Transverse colon (tissue), 4 donors: ENCODE measurements at regions of chr13 and their contacts with region 1.

Region 1: GRCh38 chr13:29543230-29544215 is 52.0 kb downstream of the SLC7A1 start:
- DNase-seq: no peak
- H3K4me3 ChIP-seq: no peak overlapping the region
- H3K27ac ChIP-seq: no peak overlapping the region
- H3K4me1 ChIP-seq: peaks cover 0 to 12% (median 6%) of the 10 kb centered on the region in 4 donors
- H3K27me3 ChIP-seq: no peaks in the 10 kb centered on the region
- CTCF ChIP-seq: no peak
- EP300 ChIP-seq: no peak
- POLR2A ChIP-seq: no peak

Region 2: DNA sequence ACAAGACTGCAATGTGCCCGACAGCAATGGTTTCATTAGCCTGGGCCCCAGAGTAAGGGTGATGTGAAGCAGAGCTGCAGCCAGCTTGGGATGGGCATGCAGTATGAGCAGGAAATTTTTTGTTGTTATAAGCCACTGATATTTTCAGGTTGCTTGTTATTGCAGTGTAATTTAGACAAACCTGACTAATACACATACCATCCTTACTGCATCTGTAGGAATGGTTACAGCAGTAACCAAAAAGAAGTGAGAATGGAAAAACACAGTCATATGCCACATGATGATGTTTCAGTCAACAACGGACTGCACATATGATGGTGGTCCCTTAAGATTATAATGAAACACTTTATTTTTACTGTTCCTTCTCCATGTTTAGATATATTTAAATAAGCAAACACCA is 893.2 kb before region 1 on chr13:
- in situ Hi-C with region 1: no loop called
- intact Hi-C with region 1: loop called (anchors 5 kb)
- DNase-seq: no peak
- H3K4me3 ChIP-seq: no peak overlapping the region
- H3K27ac ChIP-seq: no peak overlapping the region
- H3K4me1 ChIP-seq: no peaks in the 10 kb centered on the region
- H3K27me3 ChIP-seq: no peaks in the 10 kb centered on the region
- CTCF ChIP-seq: no peak
- EP300 ChIP-seq: no peak
- POLR2A ChIP-seq: no peak

Region 3: DNA sequence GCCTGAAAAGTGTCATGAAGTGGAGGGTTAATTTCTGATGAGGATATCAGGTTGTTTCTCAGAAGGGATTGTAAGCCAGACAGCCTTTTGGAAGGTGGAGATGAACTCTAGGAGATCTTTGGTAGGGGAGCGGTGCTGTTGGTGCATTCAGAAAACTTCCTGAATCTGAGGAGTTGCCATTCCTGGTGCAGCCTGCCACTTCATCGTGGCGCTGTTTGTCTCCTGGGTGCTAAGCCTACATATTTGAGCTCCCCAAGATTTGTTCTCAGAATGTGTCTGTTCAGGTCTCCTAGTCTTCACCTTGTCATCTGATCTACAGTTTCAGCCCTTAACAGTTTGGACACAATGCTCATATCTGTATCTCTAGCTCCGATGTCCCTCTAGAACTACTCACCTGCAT is 437.7 kb before region 1 on chr13:
- in situ Hi-C with region 1: no loop called
- intact Hi-C with region 1: no loop called
- DNase-seq: no peak
- H3K4me3 ChIP-seq: no peak overlapping the region
- H3K27ac ChIP-seq: no peak overlapping the region
- H3K4me1 ChIP-seq: no peaks in the 10 kb centered on the region
- H3K27me3 ChIP-seq: no peaks in the 10 kb centered on the region
- CTCF ChIP-seq: no peak
- EP300 ChIP-seq: no peak
- POLR2A ChIP-seq: no peak